ENCODE measurements at regions of chr2 and their contacts with region 1.

Region 1: GRCh38 chr2:234500394-234501006 is 3.6 kb upstream of the ARL4C start:
- DNase-seq: peak; percentile 81
- ATAC-seq: peak; percentile 65
- H3K4me3 Mint-ChIP-seq: no peak overlapping the region
- H3K27ac Mint-ChIP-seq: no peak overlapping the region
- H3K4me1 Mint-ChIP-seq: peaks cover 26% of the 10 kb centered on the region
- H3K27me3 Mint-ChIP-seq: no peaks in the 10 kb centered on the region
- CTCF ChIP-seq: peak; percentile 88

Region 2: GRCh38 chr2:234135720-234136221 is 364.7 kb before region 1 on chr2:
- CTCF ChIA-PET with region 1: interaction called, 68 read pairs
- POLR2A ChIA-PET with region 1: interaction called, 3 read pairs
- intact Hi-C with region 1: loop called (anchors 2 kb)
- DNase-seq: peak; percentile 66
- ATAC-seq: peak; percentile 83
- H3K4me3 Mint-ChIP-seq: no peak overlapping the region
- H3K27ac Mint-ChIP-seq: no peak overlapping the region
- H3K4me1 Mint-ChIP-seq: peaks cover 17% of the 10 kb centered on the region
- H3K27me3 Mint-ChIP-seq: no peaks in the 10 kb centered on the region
- CTCF ChIP-seq: peak; percentile 90

Region 3: DNA sequence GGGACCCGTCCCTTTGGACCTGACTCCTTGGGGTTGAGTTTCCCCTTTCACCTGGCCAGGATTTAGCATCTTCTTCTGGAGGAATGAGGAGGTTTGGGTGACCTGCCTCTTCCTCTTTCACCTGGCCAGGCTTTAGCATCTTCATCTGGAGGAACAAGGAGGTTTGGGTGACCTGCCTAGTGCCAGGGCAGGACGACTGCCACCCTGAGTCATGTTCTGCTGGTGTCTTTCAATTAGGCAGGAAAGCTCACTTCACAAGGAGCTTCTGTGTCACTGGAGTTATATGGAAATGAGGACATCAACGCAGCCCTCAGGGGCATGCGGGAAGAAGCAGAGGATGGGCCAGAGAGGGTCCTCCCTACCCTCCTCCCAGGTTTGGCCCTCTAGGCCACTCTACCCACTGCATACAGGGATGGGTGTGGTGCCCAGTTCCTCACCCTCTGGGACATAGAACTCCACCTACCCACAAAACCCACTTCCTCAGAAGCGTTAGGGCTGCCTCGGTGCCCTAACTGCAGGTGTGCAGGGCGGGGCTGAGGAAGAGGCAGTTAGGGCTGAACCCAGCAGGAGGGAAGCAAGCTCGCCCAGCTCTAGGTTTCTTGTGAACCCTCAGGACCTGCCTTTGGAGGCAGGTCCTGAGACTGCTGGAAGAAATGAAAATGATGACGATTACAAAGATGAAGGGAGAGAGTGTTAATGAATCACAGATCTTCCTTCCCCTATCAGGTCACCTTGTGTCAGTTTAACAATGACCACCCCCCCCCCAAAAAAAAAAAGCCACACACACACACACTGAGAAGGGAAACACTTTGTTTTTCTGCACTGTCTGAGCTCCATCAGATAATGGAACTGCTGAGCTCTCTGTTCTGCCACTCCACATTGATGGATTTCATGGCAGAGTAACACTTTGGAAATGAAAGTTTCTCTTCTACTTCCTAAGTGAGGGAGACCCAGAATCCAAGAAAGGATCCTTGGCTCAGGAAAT is 74.6 kb before region 1 on chr2:
- CTCF ChIA-PET with region 1: interaction called, 7 read pairs
- POLR2A ChIA-PET with region 1: interaction called, 11 read pairs
- intact Hi-C with region 1: loop called (anchors 10 kb)
- DNase-seq: peak; percentile 73
- ATAC-seq: peak; percentile 61
- H3K4me3 Mint-ChIP-seq: peak overlapping the region; percentile 55
- H3K27ac Mint-ChIP-seq: peak overlapping the region; percentile 88
- H3K4me1 Mint-ChIP-seq: peaks cover 81% of the 10 kb centered on the region
- H3K27me3 Mint-ChIP-seq: no peaks in the 10 kb centered on the region
- CTCF ChIP-seq: no peak

Region 4: GRCh38 chr2:234451852-234452625 is 48.5 kb before region 1 on chr2:
- CTCF ChIA-PET with region 1: interaction called, 4 read pairs
- POLR2A ChIA-PET with region 1: interaction called, 39 read pairs
- intact Hi-C with region 1: no loop called
- DNase-seq: no peak
- ATAC-seq: no peak
- H3K4me3 Mint-ChIP-seq: peak overlapping the region; percentile 77
- H3K27ac Mint-ChIP-seq: peak overlapping the region; percentile 89
- H3K4me1 Mint-ChIP-seq: peaks cover 70% of the 10 kb centered on the region
- H3K27me3 Mint-ChIP-seq: no peaks in the 10 kb centered on the region
- CTCF ChIP-seq: no peak

Region 5: DNA sequence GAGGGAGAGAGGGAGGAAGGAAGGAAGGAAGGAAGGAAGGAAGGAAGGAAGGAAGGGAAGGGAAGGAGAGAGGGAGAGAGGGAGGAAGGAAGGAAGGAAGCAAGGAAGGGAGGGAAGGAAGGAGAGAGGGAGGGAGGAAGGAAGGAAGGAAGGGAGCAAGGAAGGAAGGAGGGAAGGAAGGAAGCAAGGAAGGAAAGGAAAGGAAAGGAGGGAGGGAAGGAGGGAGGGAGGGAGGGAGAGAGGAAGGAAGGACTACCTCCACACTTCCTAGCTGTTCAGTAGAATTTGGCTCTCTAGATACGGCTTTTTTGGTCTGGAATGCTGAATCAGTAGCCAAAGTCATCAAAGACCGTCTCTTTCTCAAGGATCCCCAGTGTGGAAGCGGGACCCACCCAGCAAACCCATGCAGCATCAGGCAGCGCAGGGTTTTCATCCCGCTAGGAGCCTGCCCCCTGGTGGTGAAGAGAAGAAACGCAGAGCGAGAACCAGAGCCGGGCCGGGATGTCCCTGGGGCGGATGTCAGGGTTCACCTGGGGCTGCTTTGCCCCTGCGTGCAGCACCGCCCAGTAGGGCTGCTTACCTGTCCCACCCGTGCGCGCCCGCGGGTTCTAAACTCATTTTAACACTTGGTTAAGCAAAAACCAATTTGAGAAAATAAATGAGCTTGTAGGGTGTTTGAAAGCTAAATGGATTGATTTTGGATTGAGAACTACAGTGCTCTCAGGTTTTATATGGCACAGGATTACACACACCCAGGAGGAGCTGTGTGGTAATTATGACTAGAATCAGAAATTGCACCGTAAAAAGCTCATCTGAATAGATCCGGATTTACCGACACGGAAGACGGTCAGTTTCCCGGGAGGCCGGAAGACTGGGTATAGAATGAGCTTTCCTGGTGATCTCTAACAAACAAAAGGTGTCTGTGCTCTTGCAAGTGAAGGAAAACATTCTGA is 44.4 kb after region 1 on chr2:
- CTCF ChIA-PET with region 1: interaction called, 24 read pairs
- POLR2A ChIA-PET with region 1: no interaction called
- intact Hi-C with region 1: no loop called
- DNase-seq: peak; percentile 84
- ATAC-seq: peak; percentile 94
- H3K4me3 Mint-ChIP-seq: no peak overlapping the region
- H3K27ac Mint-ChIP-seq: no peak overlapping the region
- H3K4me1 Mint-ChIP-seq: no peaks in the 10 kb centered on the region
- H3K27me3 Mint-ChIP-seq: peaks cover 10% of the 10 kb centered on the region
- CTCF ChIP-seq: peak; percentile 90